Ovary (tissue), 10 donors: ENCODE measurements at regions of chr3 and their contacts with region 1.

Region 1: DNA sequence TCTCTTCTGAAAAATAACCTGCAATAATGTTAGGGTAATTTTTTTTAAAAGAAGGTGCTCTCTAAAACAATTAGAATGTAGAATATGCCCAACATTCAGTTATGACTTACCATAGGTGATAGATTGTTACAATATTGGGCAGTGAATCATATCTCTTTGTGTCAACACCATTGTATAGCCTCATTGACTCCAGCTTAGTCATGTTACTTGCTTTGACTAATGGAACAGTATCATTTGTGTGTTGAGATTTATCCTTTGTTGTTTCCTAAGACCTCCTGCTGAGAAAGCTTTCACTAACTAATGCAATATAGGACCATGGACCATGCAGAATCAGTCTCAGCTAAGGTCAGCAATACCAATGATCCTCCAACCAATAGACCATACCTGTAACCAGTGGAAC is 1106.4 kb downstream of the SI start:
- DNase-seq: no peak
- H3K4me3 ChIP-seq: no peak overlapping the region
- H3K27ac ChIP-seq: no peak overlapping the region
- H3K4me1 ChIP-seq: no peaks in the 10 kb centered on the region
- H3K27me3 ChIP-seq: peaks cover 2% of the 10 kb centered on the region
- CTCF ChIP-seq: no peak
- EP300 ChIP-seq: no peak
- POLR2A ChIP-seq: no peak

Region 2: GRCh38 chr3:164095279-164095678 is 123.4 kb after region 1 on chr3:
- intact Hi-C with region 1: loop called in 1 of 4 experiments (anchors 5 kb)
- DNase-seq: no peak
- H3K4me3 ChIP-seq: no peak overlapping the region
- H3K27ac ChIP-seq: no peak overlapping the region
- H3K4me1 ChIP-seq: no peaks in the 10 kb centered on the region
- H3K27me3 ChIP-seq: no peaks in the 10 kb centered on the region
- CTCF ChIP-seq: no peak
- EP300 ChIP-seq: no peak
- POLR2A ChIP-seq: no peak